Vagina (tissue), 2 donors: ENCODE measurements at regions of chrX and their contacts with region 1.

Region 1: GRCh38 chrX:10534611-10535010 is 85.8 kb downstream of the MID1 start:
- DNase-seq: no peak
- H3K4me3 ChIP-seq: no peak overlapping the region
- H3K27ac ChIP-seq: no peak overlapping the region
- H3K4me1 ChIP-seq: no peaks in the 10 kb centered on the region
- H3K27me3 ChIP-seq: no peaks in the 10 kb centered on the region
- CTCF ChIP-seq: no peak
- POLR2A ChIP-seq: no peak

Region 2: GRCh38 chrX:9899640-9900111 is 634.9 kb before region 1 on chrX:
- intact Hi-C with region 1: loop called (anchors 5 kb)
- DNase-seq: no peak
- H3K4me3 ChIP-seq: no peak overlapping the region
- H3K27ac ChIP-seq: no peak overlapping the region
- H3K4me1 ChIP-seq: no peaks in the 10 kb centered on the region
- H3K27me3 ChIP-seq: no peaks in the 10 kb centered on the region
- CTCF ChIP-seq: no peak
- POLR2A ChIP-seq: no peak

Region 3: DNA sequence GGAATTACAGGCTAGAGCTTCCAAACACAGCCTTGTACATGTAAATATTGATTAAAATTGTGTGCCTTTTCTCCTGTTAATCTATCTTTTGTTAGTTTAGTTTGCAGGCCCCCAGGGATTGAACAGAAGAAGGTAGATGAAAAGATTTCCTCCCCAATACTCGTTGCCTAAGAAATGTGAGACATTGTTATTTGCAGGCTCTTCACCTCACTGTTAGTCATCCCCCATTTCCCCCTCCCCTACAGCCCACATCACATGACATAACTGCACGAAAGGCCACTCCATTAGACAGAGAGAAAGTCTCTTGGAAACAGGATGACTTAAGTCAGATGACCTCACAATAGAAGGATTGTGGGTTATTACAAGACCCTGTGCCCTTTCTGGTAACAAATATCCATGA is 99.1 kb after region 1 on chrX:
- intact Hi-C with region 1: no loop called
- DNase-seq: no peak
- H3K4me3 ChIP-seq: no peak overlapping the region
- H3K27ac ChIP-seq: no peak overlapping the region
- H3K4me1 ChIP-seq: peaks cover 6% of the 10 kb centered on the region
- H3K27me3 ChIP-seq: no peaks in the 10 kb centered on the region
- CTCF ChIP-seq: no peak
- POLR2A ChIP-seq: no peak